ENCODE measurements at regions of chr11 and their contacts with region 1.

Region 1: DNA sequence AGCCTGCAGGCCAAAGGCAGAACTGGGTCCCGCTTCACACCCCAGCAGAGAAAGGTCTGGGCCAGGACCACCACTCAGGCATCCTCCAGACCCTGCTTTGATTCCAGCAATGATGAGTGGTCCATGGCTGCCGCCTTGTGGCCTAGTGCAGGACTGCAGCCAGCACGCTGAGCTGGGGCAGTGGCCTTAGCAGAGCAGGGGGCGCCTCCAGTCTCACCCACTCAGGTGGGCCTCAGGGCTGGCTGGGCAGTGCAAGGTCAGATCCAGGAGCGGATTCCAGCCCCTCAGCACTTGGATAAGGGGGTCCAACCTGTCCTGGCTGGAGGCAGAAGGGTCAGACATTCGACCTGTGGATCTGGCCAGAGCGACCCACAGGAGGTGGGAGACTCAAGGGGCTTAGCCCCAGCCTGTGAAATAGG is 9.6 kb upstream of the PDE2A start:
- DNase-seq: peak; percentile 91
- H3K4me3 ChIP-seq: peak overlapping the region in 1 of 2 experiments; percentile 40; a peak in 1 of 4 replicates
- H3K27ac ChIP-seq: no peak overlapping the region
- H3K4me1 ChIP-seq: peaks cover 0 to 20% of the 10 kb centered on the region in 2 experiments; a peak in 1 of 4 replicates
- H3K27me3 ChIP-seq: no peaks in the 10 kb centered on the region
- CTCF ChIP-seq: peak; percentile 86
- EP300 ChIP-seq: no peak
- RAD21 ChIP-seq: peak; percentile 88

Region 2: DNA sequence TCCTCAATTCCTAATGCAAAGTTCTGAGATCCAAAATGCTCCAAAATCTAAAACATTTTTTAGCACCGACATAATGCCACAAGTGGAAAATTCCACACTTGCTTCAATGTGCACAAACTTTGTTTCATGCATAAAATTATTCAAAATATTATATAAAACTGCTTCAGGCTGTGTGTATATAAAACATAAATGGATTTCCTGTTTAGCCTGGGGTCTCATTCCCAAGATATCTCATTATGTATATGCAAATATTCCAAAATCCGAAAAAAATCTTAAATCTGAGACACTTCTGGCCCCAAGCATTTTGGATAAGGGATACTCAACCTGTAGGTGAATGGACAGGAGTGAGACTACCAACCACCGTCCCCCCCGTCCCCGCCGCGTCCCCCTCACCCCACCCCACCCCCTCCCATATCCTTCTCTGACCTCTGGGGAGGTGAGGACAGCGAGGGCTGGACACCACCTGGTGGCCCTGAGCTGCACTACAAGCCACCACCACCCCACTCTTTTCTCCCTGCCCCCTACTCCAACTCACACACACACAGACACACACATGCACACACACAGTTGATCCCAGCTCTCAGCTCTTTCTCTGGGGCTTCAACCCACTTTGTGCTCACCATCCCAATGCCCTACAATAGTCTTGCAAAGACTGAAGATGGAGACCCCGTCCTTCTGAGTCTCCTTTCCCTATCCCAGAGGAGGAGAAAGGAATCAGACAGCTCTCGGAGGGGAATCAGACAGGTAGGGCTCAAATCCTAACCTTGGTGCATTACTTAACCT is 110.5 kb before region 1 on chr11:
- CTCF ChIA-PET with region 1: interaction called, 36 read pairs
- POLR2A ChIA-PET with region 1: no interaction called
- DNase-seq: peak; percentile 92
- H3K4me3 ChIP-seq: no peak overlapping the region
- H3K27ac ChIP-seq: no peak overlapping the region
- H3K4me1 ChIP-seq: no peaks in the 10 kb centered on the region; a peak in 3 of 4 replicates
- H3K27me3 ChIP-seq: no peaks in the 10 kb centered on the region
- CTCF ChIP-seq: peak; percentile 64
- EP300 ChIP-seq: no peak
- RAD21 ChIP-seq: peak; percentile 78

Region 3: DNA sequence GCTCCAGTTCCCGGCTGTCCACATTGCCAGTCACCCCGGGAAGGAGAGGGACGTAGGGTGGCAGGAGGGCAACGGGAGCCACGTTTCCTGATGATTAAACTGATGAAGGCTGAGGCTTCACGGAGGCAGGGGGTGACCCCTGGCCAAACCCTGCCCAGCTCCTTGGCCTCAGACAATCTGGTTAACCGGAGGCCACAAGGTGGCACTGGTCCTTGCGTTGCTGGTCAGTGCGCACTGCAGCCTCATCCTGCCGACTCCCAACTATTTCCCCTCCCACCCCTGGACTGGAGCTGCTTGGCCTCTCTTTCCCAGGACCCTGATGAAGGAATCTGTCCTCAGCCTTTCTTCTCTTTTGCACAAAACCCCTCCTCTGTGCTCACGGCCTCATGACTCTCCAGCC is 84.9 kb before region 1 on chr11:
- CTCF ChIA-PET with region 1: interaction called, 133 read pairs
- POLR2A ChIA-PET with region 1: interaction called, 4 read pairs
- DNase-seq: peak; percentile 83
- H3K4me3 ChIP-seq: no peak overlapping the region
- H3K27ac ChIP-seq: no peak overlapping the region
- H3K4me1 ChIP-seq: peaks cover 0 to 20% of the 10 kb centered on the region in 2 experiments; a peak in 1 of 4 replicates
- H3K27me3 ChIP-seq: peaks cover 11% of the 10 kb centered on the region; the same call in 1 of the 2 replicates
- CTCF ChIP-seq: peak; percentile 46
- EP300 ChIP-seq: no peak
- RAD21 ChIP-seq: peak; percentile 74

Region 4: DNA sequence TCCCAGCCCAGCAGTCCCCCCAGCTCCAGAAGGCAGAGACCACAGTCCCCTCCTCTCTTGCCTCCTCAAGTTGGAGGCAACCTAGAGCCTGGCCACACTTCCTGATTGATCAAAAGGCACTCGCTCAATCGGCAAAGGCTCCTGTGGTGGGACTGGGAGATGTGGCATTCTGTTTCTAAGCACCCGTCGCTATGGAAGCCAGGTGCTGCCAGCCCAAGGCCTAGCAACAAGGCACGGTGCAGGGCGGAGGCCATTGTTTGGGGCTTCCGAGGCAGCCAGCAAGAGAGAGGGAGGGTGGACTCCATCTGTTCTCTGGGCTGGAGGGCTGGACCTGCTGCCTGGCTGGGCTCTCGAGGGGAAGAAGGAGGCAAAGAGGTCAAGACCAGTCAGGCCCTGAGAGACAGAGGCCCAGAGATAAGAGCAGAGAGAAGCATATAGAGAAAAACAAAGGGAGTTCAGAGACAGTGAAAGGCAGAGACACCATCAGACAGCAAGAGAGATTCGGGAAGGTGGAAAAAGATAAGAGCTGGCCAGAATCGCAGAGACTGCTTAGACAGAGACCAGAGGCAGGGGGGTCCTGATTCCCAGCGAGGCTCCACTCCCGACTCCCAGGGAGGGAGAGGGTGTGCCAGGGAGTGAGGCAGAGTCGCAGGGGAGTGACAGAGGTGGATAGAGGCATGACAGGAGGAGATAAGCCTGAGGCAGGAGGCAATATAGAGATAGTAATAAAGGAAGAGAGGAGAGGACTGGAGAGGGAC is 30.7 kb before region 1 on chr11:
- CTCF ChIA-PET with region 1: interaction called, 36 read pairs
- POLR2A ChIA-PET with region 1: interaction called, 3 read pairs
- DNase-seq: peak; percentile 63
- H3K4me3 ChIP-seq: no peak overlapping the region
- H3K27ac ChIP-seq: no peak overlapping the region
- H3K4me1 ChIP-seq: peaks cover 0 to 43% of the 10 kb centered on the region in 2 experiments; a peak in 1 of 4 replicates
- H3K27me3 ChIP-seq: no peaks in the 10 kb centered on the region; the same call in 1 of the 2 replicates
- CTCF ChIP-seq: no peak
- EP300 ChIP-seq: no peak
- RAD21 ChIP-seq: no peak

Region 5: GRCh38 chr11:72703267-72704008 is 19.6 kb after region 1 on chr11:
- CTCF ChIA-PET with region 1: interaction called, 36 read pairs
- POLR2A ChIA-PET with region 1: no interaction called
- DNase-seq: no peak
- H3K4me3 ChIP-seq: no peak overlapping the region
- H3K27ac ChIP-seq: peak overlapping the region in 1 of 2 experiments; percentile 44; a peak in 1 of 4 replicates
- H3K4me1 ChIP-seq: peaks cover 0 to 12% of the 10 kb centered on the region in 2 experiments; a peak in 1 of 4 replicates
- H3K27me3 ChIP-seq: no peaks in the 10 kb centered on the region
- CTCF ChIP-seq: no peak
- EP300 ChIP-seq: no peak
- RAD21 ChIP-seq: no peak

Region 6: GRCh38 chr11:72793425-72794367 is 109.9 kb after region 1 on chr11 and contains the start of gene STARD10:
- CTCF ChIA-PET with region 1: interaction called, 10 read pairs
- POLR2A ChIA-PET with region 1: interaction called, 3 read pairs
- DNase-seq: peak; percentile 99
- H3K4me3 ChIP-seq: peak within 1 kb of the TSS; percentile 75 to 89
- H3K27ac ChIP-seq: peak within 1 kb of the TSS; percentile 66 to 91
- H3K4me1 ChIP-seq: peaks cover 9 to 26% of the 10 kb centered on the region in 2 experiments; a peak in 2 of 4 replicates
- H3K27me3 ChIP-seq: no peaks in the 10 kb centered on the region
- CTCF ChIP-seq: peak; percentile 99
- EP300 ChIP-seq: no peak; a peak in 1 of 4 replicates
- RAD21 ChIP-seq: peak; percentile 78
- polyA plus RNA-seq, gene STARD10: 42.2 and 47.7 TPM in 2 replicates